RWPE1 (cell line): ENCODE measurements at regions of chr20 and their contacts with region 1.

Region 1: DNA sequence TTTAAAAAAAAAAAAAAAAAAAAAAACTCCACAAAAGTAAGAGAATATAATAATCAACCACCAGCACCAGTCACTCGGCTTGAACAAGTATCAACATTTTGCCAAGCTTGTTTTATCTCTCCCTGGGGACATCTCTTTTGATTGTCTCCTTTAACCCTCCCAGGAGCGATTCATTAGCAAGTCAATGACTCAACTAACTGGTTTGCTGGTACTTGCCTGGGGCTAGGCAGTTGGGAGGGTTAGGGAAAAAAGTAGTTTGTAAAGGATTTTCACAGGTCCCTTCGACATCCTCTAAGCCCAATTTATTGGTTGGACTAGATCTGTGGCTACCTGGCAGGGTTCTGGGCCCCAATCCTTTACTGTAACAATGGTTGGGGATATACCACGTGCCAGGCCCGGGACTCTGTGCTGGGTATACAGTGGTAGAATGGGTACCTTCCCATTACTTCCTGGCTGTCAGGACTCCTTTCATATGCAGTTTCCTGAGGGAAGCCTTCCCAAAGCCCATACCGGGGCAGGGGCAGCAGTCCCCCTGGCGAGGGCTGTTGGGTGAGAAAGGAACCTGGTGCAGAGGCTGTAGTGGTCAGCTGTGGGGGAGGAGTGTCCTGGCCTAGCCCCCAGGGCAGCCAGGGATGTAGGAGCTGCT is 12.2 kb downstream of the TGIF2 start:
- DNase-seq: peak; percentile 99
- H3K27ac ChIP-seq: peak overlapping the region; percentile 82
- CTCF ChIP-seq: no peak

Region 2: DNA sequence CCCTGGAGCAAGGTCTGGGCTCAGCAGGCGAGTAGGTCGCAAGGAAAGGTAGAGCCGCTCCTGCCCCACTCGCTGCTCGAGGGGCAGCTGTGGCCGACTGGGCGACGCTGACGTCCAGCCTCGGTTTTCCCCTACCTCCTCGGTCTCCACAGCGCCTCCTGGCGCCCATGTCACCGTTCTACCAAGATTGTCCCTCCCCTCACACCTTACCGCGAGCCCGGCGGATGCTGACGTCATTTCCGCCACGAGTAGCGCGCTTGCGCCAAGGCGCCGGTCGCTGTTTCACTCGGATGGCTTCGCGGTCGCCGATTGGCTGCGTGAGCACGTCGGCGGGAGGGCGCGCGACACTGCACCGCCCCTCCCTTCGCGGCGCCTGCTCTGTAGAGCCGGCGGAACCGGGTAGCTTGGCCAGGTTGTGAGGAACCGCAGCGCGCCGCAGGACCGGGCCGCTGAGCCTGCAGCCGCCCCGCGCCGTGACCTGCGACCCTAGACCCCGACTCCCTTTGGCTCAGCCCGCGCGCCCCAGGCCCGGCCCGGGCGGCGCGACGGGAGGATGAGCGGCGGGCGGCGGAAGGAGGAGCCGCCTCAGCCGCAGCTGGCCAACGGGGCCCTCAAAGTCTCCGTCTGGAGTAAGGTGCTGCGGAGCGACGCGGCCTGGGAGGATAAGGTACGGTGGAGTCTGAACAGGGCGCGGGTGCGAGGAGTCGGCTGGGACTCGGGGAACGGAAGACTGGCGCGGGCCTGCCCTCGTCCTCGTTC is 20.0 kb after region 1 on chr20 and contains the start of gene RAB5IF:
- CTCF ChIA-PET with region 1: interaction called, 17 read pairs
- POLR2A ChIA-PET with region 1: no interaction called
- DNase-seq: peak; percentile 99
- H3K27ac ChIP-seq: peak within 1 kb of the TSS; percentile 80
- CTCF ChIP-seq: peak; percentile 99

Region 3: GRCh38 chr20:36975099-36975818 is 389.7 kb after region 1 on chr20:
- CTCF ChIA-PET with region 1: no interaction called
- POLR2A ChIA-PET with region 1: no interaction called
- DNase-seq: no peak
- H3K27ac ChIP-seq: no peak overlapping the region
- CTCF ChIP-seq: no peak